Motor neuron (in vitro differentiated cells): ENCODE measurements at regions of chr19 and their contacts with region 1.

Region 1: DNA sequence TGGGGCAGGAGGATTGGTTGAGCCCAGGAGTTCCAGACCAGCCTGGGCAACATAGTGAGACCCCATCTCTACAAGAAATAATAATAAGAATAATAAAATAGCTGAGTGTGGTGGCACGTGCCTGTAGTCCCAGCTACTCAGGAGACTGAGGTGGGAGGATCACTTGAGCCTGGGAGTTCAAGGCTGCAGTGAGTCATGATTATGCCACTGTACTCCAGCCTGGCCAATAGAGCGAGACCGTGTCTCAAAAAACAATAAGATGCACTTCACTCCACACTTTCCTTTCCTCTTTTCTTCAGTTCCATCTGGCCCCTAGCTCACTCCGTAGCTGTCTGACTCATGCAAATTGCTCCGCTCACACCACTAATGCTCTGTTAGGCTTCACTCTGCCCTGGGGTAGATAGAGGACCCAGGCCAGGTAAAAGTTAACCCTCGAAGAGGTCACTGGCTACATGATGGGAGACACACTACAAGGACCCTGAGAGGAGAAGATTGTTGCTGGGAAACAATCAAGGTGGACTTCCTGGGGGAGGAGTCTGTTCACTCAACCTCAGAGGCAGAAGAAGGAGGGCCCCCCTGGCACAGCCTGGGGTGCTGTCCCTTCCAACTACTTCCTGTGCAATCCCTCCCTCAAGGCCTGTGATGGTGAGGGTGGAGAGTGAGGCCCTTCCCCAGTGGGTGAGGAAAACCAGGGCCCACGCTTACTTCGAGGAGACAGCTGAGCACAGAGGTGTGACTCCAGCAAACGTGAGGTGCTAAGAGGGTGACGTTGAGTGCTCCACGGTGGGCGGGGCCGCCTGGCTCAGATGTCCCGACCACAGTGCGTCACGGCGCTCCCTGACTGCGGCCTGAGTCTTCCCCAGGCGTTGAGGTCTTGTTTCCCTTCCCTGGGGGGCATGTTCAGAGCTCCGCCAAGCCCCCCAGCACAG is 8.8 kb upstream of the TNFSF9 start:
- ATAC-seq: no peak
- H3K4me3 ChIP-seq: no peak overlapping the region
- H3K27ac ChIP-seq: no peak overlapping the region
- H3K4me1 ChIP-seq: peaks cover 0 to 3% of the 10 kb centered on the region in 2 donors

Region 2: DNA sequence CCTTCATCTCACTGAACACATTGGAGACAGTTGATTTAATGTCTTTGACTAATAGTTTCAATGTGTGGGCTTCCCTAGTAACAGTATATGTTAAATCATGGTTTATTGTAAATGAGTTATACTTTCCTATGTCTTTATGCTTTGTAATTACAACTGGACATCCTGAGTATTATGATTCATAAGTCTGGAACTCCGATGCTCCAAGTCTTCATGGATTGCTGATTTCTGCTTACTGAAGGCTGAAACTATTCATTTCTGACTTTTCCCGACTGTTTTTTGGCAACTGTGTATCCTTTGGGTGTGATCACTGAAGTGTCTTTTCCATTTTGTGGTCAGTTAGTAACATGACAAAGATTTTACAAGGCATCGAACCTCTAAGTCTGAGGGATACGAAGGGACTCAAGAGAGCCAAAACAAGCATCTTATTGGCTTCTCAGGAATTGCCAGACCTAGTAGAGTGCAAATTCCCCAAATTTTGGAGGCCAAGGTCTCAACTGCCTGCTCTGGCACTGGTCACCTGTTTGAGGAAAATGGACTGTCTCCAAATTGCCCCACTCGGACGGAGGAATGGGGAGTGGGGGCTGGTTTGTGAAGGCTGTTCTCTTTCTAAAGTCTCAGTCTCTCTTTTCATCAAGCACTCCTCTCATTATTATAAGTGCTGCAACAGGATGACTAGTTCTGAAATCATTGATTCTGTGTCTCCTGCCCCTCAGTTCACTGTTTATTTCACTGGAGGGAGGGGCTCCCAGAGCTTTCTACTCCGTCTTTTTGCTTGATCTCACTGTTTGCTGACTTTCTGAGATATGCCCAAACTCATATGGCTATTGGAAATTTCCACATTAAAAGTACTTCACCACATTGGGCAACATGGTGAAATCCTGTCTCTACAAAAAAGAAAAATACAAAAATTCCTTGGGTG is 89.2 kb after region 1 on chr19:
- in situ Hi-C with region 1: loop called in 1 of 9 experiments (anchors 10 kb)
- ATAC-seq: peak in 3 of 8 experiments; percentile 67 to 88 (median 83)
- H3K4me3 ChIP-seq: no peak overlapping the region
- H3K27ac ChIP-seq: no peak overlapping the region
- H3K4me1 ChIP-seq: no peaks in the 10 kb centered on the region

Region 3: GRCh38 chr19:6632002-6632621 is 110.1 kb after region 1 on chr19:
- in situ Hi-C with region 1: loop called in 1 of 9 experiments (anchors 10 kb)
- ATAC-seq: peak in 4 of 8 experiments; percentile 29 to 71 (median 59)
- H3K4me3 ChIP-seq: no peak overlapping the region
- H3K27ac ChIP-seq: no peak overlapping the region
- H3K4me1 ChIP-seq: no peaks in the 10 kb centered on the region